ENCODE measurements at regions of chr12 and their contacts with region 1.

Region 1: GRCh38 chr12:97061171-97061570 is 154.1 kb downstream of the NEDD1 start:
- DNase-seq: no peak
- H3K4me3 ChIP-seq: no peak overlapping the region
- H3K27ac ChIP-seq: no peak overlapping the region
- H3K4me1 ChIP-seq: no peaks in the 10 kb centered on the region
- H3K27me3 ChIP-seq: no peaks in the 10 kb centered on the region
- CTCF ChIP-seq: no peak
- POLR2A ChIP-seq: no peak

Region 2: DNA sequence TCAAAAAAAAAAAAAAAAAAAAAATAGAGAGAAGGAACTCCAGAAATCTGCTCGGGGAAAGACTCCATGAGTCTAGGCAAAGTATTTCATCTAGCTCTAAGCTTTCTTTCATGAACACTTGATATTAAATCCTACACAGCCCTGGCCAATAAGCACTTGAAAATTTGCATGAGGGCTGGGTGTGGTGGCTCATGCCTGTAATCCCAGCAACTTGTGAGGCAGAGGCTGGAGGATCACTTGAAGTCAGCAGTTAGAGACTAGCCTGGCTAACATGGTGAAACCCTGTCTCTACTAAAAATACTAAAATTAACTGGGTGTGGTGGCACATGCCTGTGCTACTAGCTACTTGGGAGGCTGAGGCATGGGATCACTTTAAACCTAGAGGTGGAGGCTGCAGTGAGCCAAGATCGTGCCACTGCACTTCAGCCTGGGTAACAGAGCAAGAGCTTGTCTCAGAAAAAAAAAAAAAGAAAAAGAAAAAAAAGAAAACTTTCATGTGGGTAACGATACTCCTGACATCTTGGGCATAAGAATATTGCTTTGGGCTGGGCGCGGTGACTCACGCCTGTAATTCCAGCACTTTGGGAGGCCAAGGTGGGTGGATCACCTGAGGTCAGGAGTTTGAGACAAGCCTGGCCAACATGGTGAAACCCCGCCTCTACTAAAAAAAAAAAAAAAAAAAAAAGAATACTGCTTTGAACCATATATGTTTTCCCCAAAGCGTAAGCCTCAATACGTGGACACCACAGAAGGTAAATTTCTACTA is 1600.1 kb before region 1 on chr12:
- intact Hi-C with region 1: loop called (anchors 10 kb)
- DNase-seq: no peak
- H3K4me3 ChIP-seq: no peak overlapping the region
- H3K27ac ChIP-seq: no peak overlapping the region
- H3K4me1 ChIP-seq: no peaks in the 10 kb centered on the region
- H3K27me3 ChIP-seq: no peaks in the 10 kb centered on the region
- CTCF ChIP-seq: no peak
- POLR2A ChIP-seq: no peak

Region 3: DNA sequence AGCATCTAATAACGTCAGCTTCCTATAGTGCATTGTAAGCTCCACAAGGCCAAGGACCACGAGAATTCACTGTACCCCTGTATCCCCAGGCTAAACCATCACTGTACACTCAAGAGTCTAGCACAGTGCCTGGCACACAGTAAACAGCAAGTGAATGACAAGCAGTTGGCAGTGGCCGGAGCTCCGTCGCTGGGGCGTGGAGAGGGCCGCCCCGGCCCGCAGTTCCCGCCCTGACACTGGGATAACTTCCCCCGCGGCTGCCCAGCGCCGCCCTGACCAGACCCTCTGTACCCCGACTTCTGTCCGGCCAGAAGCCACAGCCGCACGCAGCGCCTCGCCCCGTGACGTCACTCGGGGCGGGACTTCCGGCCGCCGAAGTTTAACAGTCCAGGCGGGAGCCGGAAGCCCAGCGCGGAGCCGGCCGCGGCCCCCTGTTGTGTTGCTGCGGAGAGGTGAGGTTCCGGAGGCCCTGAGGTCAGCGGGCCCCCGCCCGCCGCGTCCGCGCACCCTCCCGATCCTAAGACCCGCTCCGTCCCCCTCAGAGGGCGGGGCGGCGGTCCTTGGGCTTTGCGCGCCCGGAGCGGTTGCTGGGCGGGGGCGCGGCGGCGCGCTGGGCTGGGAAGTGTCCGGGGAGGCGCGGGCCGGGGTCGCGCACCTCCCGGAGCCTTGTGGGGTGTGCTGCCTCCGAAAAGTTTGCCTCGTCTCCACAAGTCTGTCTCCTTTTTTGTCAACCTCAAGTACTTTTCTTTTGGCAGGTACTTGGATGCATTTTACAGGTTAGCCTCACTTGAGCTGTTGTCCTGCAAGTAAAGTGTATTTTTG is 154.1 kb before region 1 on chr12 and contains the start of gene NEDD1:
- intact Hi-C with region 1: no loop called
- DNase-seq: peak; percentile 84 to 86
- H3K4me3 ChIP-seq: peak within 1 kb of the TSS; percentile 73 to 95
- H3K27ac ChIP-seq: peak within 1 kb of the TSS; percentile 88 to 98
- H3K4me1 ChIP-seq: no peaks in the 10 kb centered on the region
- H3K27me3 ChIP-seq: no peaks in the 10 kb centered on the region
- CTCF ChIP-seq: no peak
- POLR2A ChIP-seq: peak; percentile 58 to 82
- total RNA-seq, gene NEDD1: 13.3 to 54.2 (median 36.3) TPM